K562 (cell line): ENCODE measurements at regions of chr5 and their contacts with region 1.

Region 1: DNA sequence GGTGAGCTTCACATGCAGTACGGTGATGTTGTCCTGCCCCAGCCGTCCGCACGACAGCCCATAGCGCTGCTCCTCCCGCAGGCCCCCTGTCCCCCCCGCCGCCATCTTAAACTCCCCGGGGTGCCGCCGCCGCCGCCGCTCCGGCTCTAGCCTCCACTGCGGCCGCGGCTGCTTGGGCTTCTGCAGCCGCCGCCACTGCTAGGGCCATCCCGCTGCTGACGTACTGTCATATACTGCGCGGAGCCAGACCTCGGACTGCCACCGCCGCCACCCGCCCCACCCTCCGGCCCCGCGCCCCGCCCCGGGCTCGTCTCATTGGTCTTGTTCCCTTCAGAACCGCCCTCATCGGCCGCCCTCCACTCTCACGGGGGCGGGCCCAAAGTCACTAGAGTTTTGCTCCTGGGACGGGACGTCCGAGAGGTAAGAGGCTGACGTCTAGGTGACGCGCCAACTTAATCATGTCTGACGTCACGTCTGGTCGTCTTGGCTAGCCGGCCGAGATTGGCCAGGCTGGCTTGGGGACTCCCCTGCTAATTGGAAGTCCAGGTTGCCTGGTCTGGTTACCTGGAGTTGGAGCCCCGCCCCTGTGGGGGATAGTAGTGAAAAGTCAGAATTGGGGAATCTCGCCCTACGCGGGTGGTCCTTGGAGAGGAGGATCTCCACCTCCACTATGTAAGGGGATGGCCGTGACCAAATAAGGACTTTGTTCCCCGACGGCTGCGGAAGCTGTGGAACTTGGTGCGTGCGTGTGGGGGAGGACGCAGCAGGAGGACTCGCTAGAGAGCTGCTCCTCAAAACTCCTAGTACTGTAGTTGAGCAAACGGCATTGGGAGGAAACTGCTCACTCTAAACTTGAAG is at the start of gene ELL2:
- DNase-seq: peak; percentile 93 to 100 (median 95)
- ATAC-seq: peak; percentile 87
- H3K4me3 ChIP-seq: peak within 1 kb of the TSS; percentile 81
- H3K27ac ChIP-seq: peak within 1 kb of the TSS; percentile 87
- H3K4me1 ChIP-seq: peaks cover 31 to 33% of the 10 kb centered on the region in 2 experiments; a peak in 4 of 5 replicates
- H3K27me3 ChIP-seq: no peaks in the 10 kb centered on the region
- CTCF ChIP-seq: no peak
- EP300 ChIP-seq: no peak
- POLR2A ChIP-seq: peak; percentile 66
- RAD21 ChIP-seq: no peak; a peak in 1 of 4 replicates
- polyA plus RNA-seq, gene ELL2: 4.3 to 6.8 TPM

Region 2: DNA sequence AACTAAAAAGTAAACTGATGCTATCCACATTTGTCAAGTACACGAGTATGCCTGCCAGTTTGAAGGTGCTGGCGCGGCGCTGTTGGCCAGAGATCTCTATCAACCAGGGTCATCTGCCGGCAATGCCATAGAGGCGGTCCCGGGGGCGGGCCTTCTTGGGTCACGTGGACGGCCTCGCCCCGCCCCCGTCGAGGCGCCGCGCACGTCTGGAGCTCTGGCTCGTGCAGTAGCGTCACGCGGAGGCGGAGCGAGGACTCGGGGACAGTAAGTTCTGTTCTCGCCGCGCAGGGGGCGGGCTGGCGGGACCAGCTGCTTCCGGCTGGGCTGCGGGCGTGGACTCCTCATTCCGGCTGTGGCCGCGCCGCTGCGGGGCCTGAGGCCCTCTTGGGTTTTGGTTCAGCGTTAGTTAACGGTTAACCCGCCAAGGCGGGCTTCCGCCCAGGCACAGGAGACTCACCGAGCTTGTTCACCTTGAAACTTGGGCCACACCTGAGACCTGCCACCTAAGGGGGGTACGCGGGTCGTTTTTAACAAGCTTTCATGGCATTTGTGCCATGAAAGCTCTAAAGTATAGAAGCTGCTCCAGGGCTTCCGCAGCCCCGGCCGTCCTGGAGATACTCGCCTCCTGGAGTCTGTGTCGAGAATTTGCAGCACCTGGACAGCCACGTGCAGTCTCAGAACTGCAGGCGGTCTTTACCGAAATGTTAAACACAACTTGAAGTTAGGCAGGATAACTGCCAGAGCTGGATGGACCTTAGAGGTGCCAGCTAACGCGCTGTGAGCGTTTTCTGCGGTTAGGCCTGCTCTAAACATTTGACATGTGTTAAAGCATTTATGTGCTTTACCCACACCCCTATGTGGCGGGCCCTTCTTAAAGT is 315.1 kb before region 1 on chr5 and contains the start of gene RFESD:
- CTCF ChIA-PET with region 1: no interaction called
- POLR2A ChIA-PET with region 1: no interaction called
- in situ Hi-C with region 1: no loop called
- intact Hi-C with region 1: loop called (anchors 5 kb)
- DNase-seq: peak; percentile 92 to 99 (median 94)
- ATAC-seq: peak; percentile 89
- H3K4me3 ChIP-seq: peak within 1 kb of the TSS; percentile 49
- H3K27ac ChIP-seq: peak within 1 kb of the TSS; percentile 95
- H3K4me1 ChIP-seq: peaks cover 13 to 18% of the 10 kb centered on the region in 2 experiments
- H3K27me3 ChIP-seq: no peaks in the 10 kb centered on the region
- CTCF ChIP-seq: peak in 1 of 3 experiments; percentile 27; a peak in 2 of 6 replicates
- EP300 ChIP-seq: peak; percentile 52; the same call in 1 of the 2 replicates
- POLR2A ChIP-seq: peak; percentile 95
- RAD21 ChIP-seq: no peak; a peak in 2 of 4 replicates
- polyA plus RNA-seq, gene RFESD: 506 to 600 TPM

Region 3: GRCh38 chr5:95870105-95870672 is 91.7 kb before region 1 on chr5:
- CTCF ChIA-PET with region 1: no interaction called
- POLR2A ChIA-PET with region 1: no interaction called
- in situ Hi-C with region 1: no loop called
- intact Hi-C with region 1: no loop called
- DNase-seq: no peak
- ATAC-seq: peak; percentile 27
- H3K4me3 ChIP-seq: no peak overlapping the region
- H3K27ac ChIP-seq: no peak overlapping the region
- H3K4me1 ChIP-seq: peaks cover 4 to 9% of the 10 kb centered on the region in 2 experiments; a peak in 3 of 5 replicates
- H3K27me3 ChIP-seq: no peaks in the 10 kb centered on the region
- CTCF ChIP-seq: no peak
- EP300 ChIP-seq: no peak
- POLR2A ChIP-seq: no peak
- RAD21 ChIP-seq: no peak

Region 4: DNA sequence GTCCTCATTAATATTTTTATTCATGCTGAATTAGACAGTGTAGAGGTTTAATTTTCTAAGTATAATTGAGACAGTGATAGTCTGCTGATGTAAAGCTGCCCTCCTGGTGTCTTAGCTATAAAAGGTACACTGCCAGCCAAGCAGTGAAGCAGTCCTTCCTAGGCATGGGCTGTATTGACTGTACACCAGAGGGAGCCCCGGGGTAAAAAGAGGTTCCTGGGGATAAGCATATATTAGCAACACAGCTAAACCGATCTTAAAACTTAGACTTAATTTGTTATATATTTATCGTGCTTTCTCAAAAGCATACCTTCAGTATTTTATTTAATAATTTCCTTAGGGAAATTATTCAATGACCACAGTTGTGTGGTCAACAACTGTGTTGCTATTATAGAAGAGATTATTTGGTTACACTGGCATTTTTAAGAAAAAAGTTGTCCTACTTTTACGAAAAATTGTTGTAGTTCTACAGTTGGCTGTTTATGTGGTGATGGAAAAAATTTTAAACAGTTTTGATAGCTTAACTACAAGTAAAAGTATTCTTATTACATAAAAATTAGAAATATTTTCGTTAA is 69.0 kb before region 1 on chr5:
- CTCF ChIA-PET with region 1: interaction called, 4 read pairs
- POLR2A ChIA-PET with region 1: interaction called, 3 read pairs
- in situ Hi-C with region 1: no loop called
- intact Hi-C with region 1: loop called (anchors 2 kb)
- DNase-seq: peak; percentile 28 to 65 (median 48)
- ATAC-seq: peak; percentile 99
- H3K4me3 ChIP-seq: no peak overlapping the region
- H3K27ac ChIP-seq: no peak overlapping the region
- H3K4me1 ChIP-seq: no peaks in the 10 kb centered on the region
- H3K27me3 ChIP-seq: no peaks in the 10 kb centered on the region
- CTCF ChIP-seq: peak; percentile 58 to 79 (median 61)
- EP300 ChIP-seq: no peak
- POLR2A ChIP-seq: no peak
- RAD21 ChIP-seq: peak; percentile 80 to 88

Region 5: DNA sequence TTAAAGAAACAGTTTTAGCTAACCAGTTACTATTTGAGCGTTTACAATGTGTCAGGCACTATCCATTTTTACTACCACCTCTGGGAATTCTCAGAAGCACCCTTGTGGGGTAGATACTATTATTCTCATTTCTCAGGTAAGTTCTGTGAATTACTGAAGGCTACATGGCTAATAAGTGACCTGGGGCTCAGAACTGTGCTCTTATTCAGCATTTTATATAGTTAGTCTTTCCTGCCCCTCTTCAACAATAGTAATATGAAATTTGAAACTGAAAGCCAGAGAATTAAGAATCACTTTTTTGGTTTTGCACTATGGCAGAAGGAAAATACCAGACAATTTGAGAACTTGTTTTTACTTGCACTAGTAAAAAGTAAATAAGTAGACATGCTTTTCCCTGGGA is 12.0 kb before region 1 on chr5:
- CTCF ChIA-PET with region 1: no interaction called
- POLR2A ChIA-PET with region 1: interaction called, 12 read pairs
- in situ Hi-C with region 1: no loop called
- intact Hi-C with region 1: no loop called
- DNase-seq: no peak
- ATAC-seq: no peak
- H3K4me3 ChIP-seq: no peak overlapping the region
- H3K27ac ChIP-seq: no peak overlapping the region
- H3K4me1 ChIP-seq: peaks cover 7 to 29% of the 10 kb centered on the region in 2 experiments; a peak in 3 of 5 replicates
- H3K27me3 ChIP-seq: no peaks in the 10 kb centered on the region
- CTCF ChIP-seq: no peak
- EP300 ChIP-seq: no peak
- POLR2A ChIP-seq: no peak
- RAD21 ChIP-seq: no peak

Region 6: GRCh38 chr5:95984287-95984938 is 22.6 kb after region 1 on chr5:
- CTCF ChIA-PET with region 1: no interaction called
- POLR2A ChIA-PET with region 1: no interaction called
- in situ Hi-C with region 1: no loop called
- intact Hi-C with region 1: no loop called
- DNase-seq: no peak
- ATAC-seq: 0 out of 3 replicates have a peak, but pooled peaks have one; percentile 32
- H3K4me3 ChIP-seq: no peak overlapping the region
- H3K27ac ChIP-seq: no peak overlapping the region
- H3K4me1 ChIP-seq: no peaks in the 10 kb centered on the region; a peak in 2 of 5 replicates
- H3K27me3 ChIP-seq: no peaks in the 10 kb centered on the region
- CTCF ChIP-seq: no peak
- EP300 ChIP-seq: no peak
- POLR2A ChIP-seq: no peak
- RAD21 ChIP-seq: no peak

Region 7: DNA sequence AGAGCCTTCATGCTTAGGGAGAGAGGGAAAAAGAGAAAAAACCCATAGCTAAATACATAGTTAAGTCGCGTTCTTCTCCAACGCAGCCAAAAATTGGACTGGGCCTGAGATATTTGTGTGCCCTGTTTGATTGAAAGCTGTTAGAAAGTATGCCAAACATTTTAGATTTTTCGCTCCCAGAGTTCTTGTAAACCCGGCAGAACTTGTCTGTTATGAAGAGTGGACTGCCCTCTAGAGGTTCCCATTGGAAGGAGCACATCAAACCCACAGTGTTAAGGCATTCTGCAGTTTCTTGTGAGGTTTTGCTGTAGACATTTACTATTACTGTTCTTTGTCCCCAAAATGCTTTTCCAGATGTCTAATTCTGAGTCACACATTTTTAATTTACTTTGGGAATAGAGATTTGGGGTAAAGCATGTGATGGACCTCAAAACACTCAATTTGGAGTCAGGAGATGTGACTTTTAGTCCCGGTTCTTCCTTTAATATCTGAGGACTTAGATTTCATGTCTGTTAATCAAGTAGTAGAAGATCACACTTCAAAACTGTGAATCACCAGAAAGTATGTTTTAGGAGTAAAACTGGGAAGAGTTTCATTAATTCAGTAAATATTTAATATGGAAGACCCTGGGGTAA is 374.6 kb after region 1 on chr5:
- CTCF ChIA-PET with region 1: no interaction called
- POLR2A ChIA-PET with region 1: no interaction called
- in situ Hi-C with region 1: no loop called
- intact Hi-C with region 1: loop called (anchors 5 kb)
- DNase-seq: peak; percentile 42 to 80 (median 48)
- ATAC-seq: peak; percentile 95
- H3K4me3 ChIP-seq: no peak overlapping the region
- H3K27ac ChIP-seq: no peak overlapping the region
- H3K4me1 ChIP-seq: peaks cover 0 to 4% of the 10 kb centered on the region in 2 experiments; a peak in 2 of 5 replicates
- H3K27me3 ChIP-seq: peaks cover 5 to 12% of the 10 kb centered on the region in 2 experiments; a peak in 4 of 5 replicates
- CTCF ChIP-seq: peak; percentile 72 to 90 (median 82)
- EP300 ChIP-seq: no peak
- POLR2A ChIP-seq: no peak
- RAD21 ChIP-seq: peak; percentile 90 to 91